IMR-90 (cell line): ENCODE measurements at regions of chr3 and their contacts with region 1.

Region 1: GRCh38 chr3:171994646-171995428 is 44.5 kb upstream of the FNDC3B start:
- DNase-seq: peak; percentile 95
- ATAC-seq: peak; percentile 93
- H3K4me3 ChIP-seq: no peak overlapping the region
- H3K27ac ChIP-seq: peak overlapping the region; percentile 83
- H3K4me1 ChIP-seq: peaks cover 2% of the 10 kb centered on the region
- H3K27me3 ChIP-seq: no peaks in the 10 kb centered on the region
- CTCF ChIP-seq: no peak
- POLR2A ChIP-seq: no peak
- RAD21 ChIP-seq: no peak

Region 2: DNA sequence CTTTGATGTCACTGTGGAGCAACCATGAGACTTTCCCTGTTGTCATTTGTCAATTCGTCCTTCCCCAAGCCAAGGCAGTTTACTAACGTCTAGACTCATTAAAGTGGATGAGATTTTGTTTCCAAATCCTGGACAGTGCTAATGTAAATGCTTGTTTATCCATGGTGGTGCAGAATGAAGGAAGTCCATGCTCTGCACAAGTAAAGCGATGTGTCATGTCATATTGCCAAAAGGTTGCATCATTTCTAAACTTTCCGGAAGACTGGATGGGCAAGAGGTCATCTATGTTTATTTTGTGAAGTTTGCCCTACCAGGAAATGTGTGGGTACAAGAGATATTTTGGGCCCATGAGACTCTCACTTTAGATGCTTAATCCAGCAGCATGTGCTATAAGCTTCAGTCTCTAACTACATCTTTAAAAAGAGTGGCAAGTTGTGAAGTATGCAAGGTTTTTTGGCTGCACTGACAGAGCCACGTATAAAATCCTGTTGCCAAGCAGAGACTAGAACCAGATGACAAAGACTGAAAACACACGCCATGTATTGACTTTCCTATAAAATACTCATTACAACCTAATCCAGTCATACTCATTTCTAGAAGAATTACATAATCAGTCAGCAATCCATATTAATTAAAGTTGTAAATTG is 27.6 kb before region 1 on chr3:
- CTCF ChIA-PET with region 1: no interaction called
- POLR2A ChIA-PET with region 1: no interaction called
- dilution Hi-C with region 1: no loop called
- in situ Hi-C with region 1: no loop called
- intact Hi-C with region 1: loop called (anchors 1 kb)
- DNase-seq: peak; percentile 90
- ATAC-seq: peak; percentile 71
- H3K4me3 ChIP-seq: no peak overlapping the region
- H3K27ac ChIP-seq: peak overlapping the region; percentile 85
- H3K4me1 ChIP-seq: peaks cover 13% of the 10 kb centered on the region
- H3K27me3 ChIP-seq: no peaks in the 10 kb centered on the region
- CTCF ChIP-seq: no peak
- POLR2A ChIP-seq: no peak
- RAD21 ChIP-seq: no peak; the same call in 1 of the 2 replicates